ENCODE measurements at regions of chr18 and their contacts with region 1.

Region 1: DNA sequence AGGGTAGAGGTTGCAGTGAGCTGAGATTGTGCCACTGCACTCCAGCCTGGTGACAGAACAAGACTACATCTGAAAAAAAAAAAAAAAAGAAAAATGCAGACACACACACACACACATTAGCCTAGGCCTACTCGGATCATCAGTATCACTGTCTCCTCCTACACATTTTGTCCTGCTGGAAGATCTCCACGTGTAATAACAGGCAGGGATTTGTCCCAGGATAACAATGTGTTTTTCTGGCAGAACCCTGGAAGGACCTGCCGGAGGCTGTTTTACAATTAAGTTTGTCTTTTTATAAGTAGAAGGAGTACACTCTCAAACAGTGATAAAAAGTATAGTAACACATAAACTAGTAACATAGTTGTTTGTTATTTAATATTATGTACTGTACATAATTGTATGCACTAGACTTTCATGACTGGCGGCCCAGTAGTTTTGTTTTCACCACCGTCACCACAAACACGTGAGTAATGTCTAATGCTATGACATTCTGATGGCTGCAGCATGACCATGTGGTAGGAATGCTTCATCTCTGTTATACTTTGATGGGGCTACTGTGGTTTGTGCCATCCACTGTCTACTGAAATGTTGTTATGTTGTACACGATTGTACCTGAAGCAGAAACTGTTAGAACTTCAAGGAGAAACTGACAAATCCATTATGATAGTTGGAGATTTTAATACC is 130.6 kb downstream of the ATP9B start:
- DNase-seq: peak in 1 of 2 donors; percentile 23
- H3K4me3 ChIP-seq: no peak overlapping the region
- H3K27ac ChIP-seq: no peak overlapping the region
- H3K4me1 ChIP-seq: no peaks in the 10 kb centered on the region
- H3K27me3 ChIP-seq: no peaks in the 10 kb centered on the region
- CTCF ChIP-seq: no peak
- POLR2A ChIP-seq: no peak

Region 2: GRCh38 chr18:78659748-78660147 is 540.1 kb before region 1 on chr18:
- intact Hi-C with region 1: loop called (anchors 5 kb)
- DNase-seq: no peak
- H3K4me3 ChIP-seq: no peak overlapping the region
- H3K27ac ChIP-seq: no peak overlapping the region
- H3K4me1 ChIP-seq: no peaks in the 10 kb centered on the region
- H3K27me3 ChIP-seq: peaks cover 0 to 13% of the 10 kb centered on the region in 2 donors
- CTCF ChIP-seq: peak in 1 of 3 donors; percentile 12
- POLR2A ChIP-seq: no peak

Measured in breast epithelium (tissue), 4 donors.